MCF 10A (cell line): ENCODE measurements at regions of chr1 and their contacts with region 1.

Region 1: DNA sequence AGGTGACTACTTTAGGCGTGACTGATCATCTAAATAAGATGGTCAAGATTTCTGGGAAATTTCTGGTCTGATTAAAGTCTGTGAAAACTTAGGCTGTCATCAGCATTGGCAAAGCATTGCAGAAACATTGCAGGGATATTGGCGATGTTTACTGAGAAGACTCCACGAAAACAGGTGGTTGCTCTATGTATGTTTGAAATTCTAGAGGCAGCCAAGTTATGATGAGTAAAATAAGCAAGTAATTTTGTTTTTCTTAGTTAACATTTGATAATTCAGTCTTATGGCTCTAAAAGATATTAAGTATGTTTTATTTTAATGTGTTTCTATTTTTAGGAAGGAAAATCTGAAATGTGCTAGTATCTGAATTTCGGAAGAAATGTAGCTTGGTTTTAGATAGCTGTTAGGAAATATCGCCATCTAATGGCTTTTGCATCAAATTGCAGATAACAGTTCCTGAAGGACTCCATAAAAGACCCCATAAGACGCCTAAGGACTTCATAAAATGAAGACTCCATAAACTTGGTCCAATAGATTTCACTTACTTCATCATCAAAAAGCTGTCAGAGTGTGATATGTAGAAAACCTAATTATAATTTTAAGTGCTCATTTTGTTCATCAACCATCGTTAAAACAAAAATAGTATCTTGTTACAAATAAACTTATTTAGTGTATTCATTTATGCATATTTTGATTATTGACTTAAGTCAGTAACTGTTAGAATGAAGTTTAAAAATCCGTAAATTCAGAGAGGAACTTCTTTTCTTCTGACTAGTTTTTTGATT is 344.6 kb downstream of the RYR2 start:
- DNase-seq: peak; percentile 54
- H3K4me3 Mint-ChIP-seq: no peak overlapping the region
- H3K27ac Mint-ChIP-seq: no peak overlapping the region
- H3K4me1 Mint-ChIP-seq: peaks cover 6% of the 10 kb centered on the region
- H3K27me3 Mint-ChIP-seq: peaks cover 16% of the 10 kb centered on the region
- CTCF ChIP-seq: peak; percentile 99

Region 2: GRCh38 chr1:236603991-236604904 is 782.3 kb before region 1 on chr1 and contains the start of gene HEATR1:
- CTCF ChIA-PET with region 1: interaction called, 58 read pairs
- POLR2A ChIA-PET with region 1: interaction called, 8 read pairs
- intact Hi-C with region 1: loop called (anchors 1 kb)
- DNase-seq: peak; percentile 99
- H3K4me3 Mint-ChIP-seq: peak within 1 kb of the TSS; percentile 81
- H3K27ac Mint-ChIP-seq: peak within 1 kb of the TSS; percentile 87
- H3K4me1 Mint-ChIP-seq: peaks cover 14% of the 10 kb centered on the region
- H3K27me3 Mint-ChIP-seq: peaks cover 2% of the 10 kb centered on the region
- CTCF ChIP-seq: no peak
- total RNA-seq, gene HEATR1: 90.6 and 128 TPM in 2 replicates

Region 3: DNA sequence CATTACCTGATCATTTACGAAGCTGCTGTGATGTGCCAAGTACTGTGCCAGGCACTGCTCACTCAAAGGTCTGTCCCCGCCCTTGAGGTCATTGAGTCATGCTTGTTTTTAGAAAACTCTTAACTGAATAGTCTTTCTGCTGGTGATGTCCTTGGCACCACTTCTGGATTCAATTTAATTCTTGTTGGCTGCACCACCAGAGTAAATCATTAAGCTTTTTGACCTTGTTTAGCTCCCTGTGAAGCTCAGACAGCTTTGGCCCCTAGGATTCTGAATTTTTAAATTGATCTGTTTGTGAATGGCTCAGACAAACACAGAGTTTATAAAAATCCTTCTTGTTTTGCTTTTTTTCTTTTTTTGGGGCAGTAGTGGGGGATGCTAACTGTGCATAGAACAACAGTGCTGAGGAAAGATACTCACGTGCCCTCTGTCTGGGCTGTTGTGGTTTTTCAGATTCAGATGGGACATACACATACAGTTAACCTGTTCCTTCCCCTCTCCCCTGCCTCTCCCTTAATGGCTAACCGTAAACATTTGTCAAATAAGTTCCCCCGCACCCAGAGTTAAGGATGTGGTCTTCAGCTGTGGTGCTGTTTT is 523.8 kb before region 1 on chr1:
- CTCF ChIA-PET with region 1: interaction called, 13 read pairs
- POLR2A ChIA-PET with region 1: interaction called, 3 read pairs
- intact Hi-C with region 1: no loop called
- DNase-seq: peak; percentile 16
- H3K4me3 Mint-ChIP-seq: no peak overlapping the region
- H3K27ac Mint-ChIP-seq: peak overlapping the region; percentile 24
- H3K4me1 Mint-ChIP-seq: peaks cover 5% of the 10 kb centered on the region
- H3K27me3 Mint-ChIP-seq: no peaks in the 10 kb centered on the region
- CTCF ChIP-seq: no peak

Region 4: DNA sequence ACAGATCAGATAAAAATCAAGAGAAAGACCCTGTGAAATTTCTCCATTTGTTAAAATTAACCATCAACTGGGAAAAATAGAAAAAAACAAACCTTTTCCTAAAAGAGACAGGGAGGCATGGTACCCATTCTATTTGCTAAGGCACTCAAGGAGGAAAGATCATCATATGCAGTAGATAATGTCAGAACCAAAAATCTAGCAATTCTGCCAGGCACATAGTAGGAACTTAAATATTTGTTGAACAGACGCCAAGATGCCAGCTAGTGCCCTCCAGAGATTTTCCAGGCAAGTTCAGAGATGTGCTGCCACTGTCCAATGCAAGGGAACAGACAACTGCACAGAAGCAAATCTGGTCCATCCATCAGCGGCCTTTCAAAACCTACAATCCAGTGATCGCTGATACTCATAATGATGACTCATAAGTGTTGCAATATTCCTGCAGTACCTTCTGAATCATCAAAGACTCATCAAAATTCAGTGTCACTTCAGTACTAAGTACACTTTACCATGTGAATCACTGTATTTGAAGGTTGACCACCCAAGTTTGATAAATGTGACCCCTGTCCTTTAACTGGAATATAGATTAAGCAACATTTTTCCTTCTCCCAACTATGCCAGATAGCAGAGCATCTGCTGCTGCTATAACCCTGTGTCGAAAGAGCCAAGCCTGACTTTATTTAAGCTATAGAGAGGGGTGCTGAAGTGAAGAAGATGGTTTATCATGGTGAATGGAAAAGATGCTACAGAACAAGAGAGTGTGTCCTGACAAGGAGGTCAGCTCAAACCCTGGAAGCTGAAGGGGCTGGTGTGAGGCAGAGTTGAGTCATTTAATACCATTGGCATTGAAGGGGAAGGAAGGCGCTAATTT is 481.4 kb before region 1 on chr1:
- CTCF ChIA-PET with region 1: interaction called, 10 read pairs
- POLR2A ChIA-PET with region 1: interaction called, 5 read pairs
- intact Hi-C with region 1: loop called (anchors 1 kb)
- DNase-seq: peak; percentile 96
- H3K4me3 Mint-ChIP-seq: no peak overlapping the region
- H3K27ac Mint-ChIP-seq: no peak overlapping the region
- H3K4me1 Mint-ChIP-seq: peaks cover 11% of the 10 kb centered on the region
- H3K27me3 Mint-ChIP-seq: no peaks in the 10 kb centered on the region
- CTCF ChIP-seq: no peak

Region 5: DNA sequence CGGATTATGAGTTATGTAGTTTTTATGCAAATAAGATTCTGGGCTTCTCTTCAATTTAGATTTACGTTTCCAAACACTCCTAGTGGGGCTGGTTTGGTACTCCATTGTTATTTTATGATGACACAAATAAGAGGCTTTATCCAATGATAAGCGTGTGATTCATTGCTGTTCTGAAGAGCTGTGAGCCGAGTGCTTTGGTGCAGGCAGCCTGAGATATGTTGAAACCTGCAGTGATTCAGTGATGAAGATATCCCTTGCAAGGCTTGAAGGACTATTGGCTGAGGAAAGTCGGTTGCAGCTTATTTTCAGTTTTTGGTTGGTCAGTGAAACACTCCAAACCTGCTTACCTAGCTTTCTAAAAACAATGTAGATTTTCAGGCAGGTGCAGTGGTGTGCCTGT is 232.4 kb before region 1 on chr1:
- CTCF ChIA-PET with region 1: interaction called, 13 read pairs
- POLR2A ChIA-PET with region 1: interaction called, 3 read pairs
- intact Hi-C with region 1: loop called (anchors 5 kb)
- DNase-seq: peak; percentile 96
- H3K4me3 Mint-ChIP-seq: no peak overlapping the region
- H3K27ac Mint-ChIP-seq: no peak overlapping the region
- H3K4me1 Mint-ChIP-seq: peaks cover 19% of the 10 kb centered on the region
- H3K27me3 Mint-ChIP-seq: no peaks in the 10 kb centered on the region
- CTCF ChIP-seq: no peak

Region 6: DNA sequence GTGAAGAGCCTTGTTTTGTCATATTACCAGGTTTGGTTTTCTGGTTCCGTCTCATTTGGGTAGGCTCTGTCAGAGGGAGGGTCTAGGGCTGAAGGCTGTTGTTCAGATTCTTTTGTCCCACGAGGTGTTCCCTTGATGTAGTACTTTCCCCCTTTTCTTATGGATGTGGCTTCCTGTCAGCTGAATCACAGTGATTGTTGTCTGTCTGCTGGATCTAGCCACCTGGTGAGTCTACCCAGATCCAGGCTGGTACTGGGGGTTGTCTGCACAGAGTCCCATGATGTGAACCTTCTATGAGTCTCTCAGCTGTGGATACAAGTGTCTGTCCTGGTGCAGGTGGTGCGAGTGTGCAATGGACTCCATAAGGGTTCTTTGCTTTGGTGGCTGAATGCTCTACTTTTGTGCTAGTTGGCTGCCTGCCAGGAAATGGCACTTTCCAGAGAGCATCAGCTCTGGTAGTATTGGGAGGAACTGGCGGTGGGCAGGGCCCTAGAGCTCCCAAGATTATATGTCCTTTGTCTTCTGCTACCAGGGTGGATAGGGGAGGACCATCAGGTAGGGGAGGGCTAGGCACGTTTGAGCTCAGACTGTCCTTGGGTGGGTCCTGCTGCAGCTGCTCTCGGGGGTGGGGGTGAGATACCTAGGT is 98.6 kb before region 1 on chr1:
- CTCF ChIA-PET with region 1: no interaction called
- POLR2A ChIA-PET with region 1: no interaction called
- intact Hi-C with region 1: no loop called
- DNase-seq: peak; percentile 39
- H3K4me3 Mint-ChIP-seq: no peak overlapping the region
- H3K27ac Mint-ChIP-seq: no peak overlapping the region
- H3K4me1 Mint-ChIP-seq: no peaks in the 10 kb centered on the region
- H3K27me3 Mint-ChIP-seq: peaks cover 87% of the 10 kb centered on the region
- CTCF ChIP-seq: no peak

Region 7: GRCh38 chr1:237411621-237412020 is 25.1 kb after region 1 on chr1:
- CTCF ChIA-PET with region 1: interaction called, 14 read pairs
- POLR2A ChIA-PET with region 1: no interaction called
- intact Hi-C with region 1: no loop called
- DNase-seq: peak; percentile 71
- H3K4me3 Mint-ChIP-seq: no peak overlapping the region
- H3K27ac Mint-ChIP-seq: no peak overlapping the region
- H3K4me1 Mint-ChIP-seq: no peaks in the 10 kb centered on the region
- H3K27me3 Mint-ChIP-seq: no peaks in the 10 kb centered on the region
- CTCF ChIP-seq: no peak